T-cell (primary cell): ENCODE measurements at regions of chr20 and their contacts with region 1.

Region 1: GRCh38 chr20:9609887-9610502 is 95.6 kb downstream of the LAMP5 start:
- DNase-seq: peak in 15 of 35 experiments; percentile 1 to 45 (median 10)
- ATAC-seq: no peak
- H3K4me3 ChIP-seq: no peak overlapping the region
- H3K4me3 Mint-ChIP-seq: no peak overlapping the region
- H3K27ac ChIP-seq: no peak overlapping the region
- H3K27ac Mint-ChIP-seq: no peak overlapping the region
- H3K4me1 ChIP-seq: no peaks in the 10 kb centered on the region
- H3K4me1 Mint-ChIP-seq: no peaks in the 10 kb centered on the region
- H3K27me3 ChIP-seq: no peaks in the 10 kb centered on the region
- H3K27me3 Mint-ChIP-seq: peaks cover 0 to 3% of the 10 kb centered on the region in 2 donors

Region 2: GRCh38 chr20:9407805-9408421 is 202.1 kb before region 1 on chr20:
- CTCF ChIA-PET with region 1: interaction called, 8 to 19 read pairs
- POLR2A ChIA-PET with region 1: no interaction called
- DNase-seq: peak in 14 of 35 experiments; percentile 4 to 53 (median 14)
- ATAC-seq: no peak
- H3K4me3 ChIP-seq: no peak overlapping the region
- H3K4me3 Mint-ChIP-seq: no peak overlapping the region
- H3K27ac ChIP-seq: no peak overlapping the region
- H3K27ac Mint-ChIP-seq: no peak overlapping the region
- H3K4me1 ChIP-seq: no peaks in the 10 kb centered on the region
- H3K4me1 Mint-ChIP-seq: no peaks in the 10 kb centered on the region
- H3K27me3 ChIP-seq: no peaks in the 10 kb centered on the region
- H3K27me3 Mint-ChIP-seq: no peaks in the 10 kb centered on the region

Region 3: GRCh38 chr20:9689041-9689440 is 79.0 kb after region 1 on chr20:
- CTCF ChIA-PET with region 1: no interaction called
- POLR2A ChIA-PET with region 1: interaction called in 1 of 2 experiments, 12 read pairs
- DNase-seq: no peak
- ATAC-seq: no peak
- H3K4me3 ChIP-seq: no peak overlapping the region
- H3K4me3 Mint-ChIP-seq: no peak overlapping the region
- H3K27ac ChIP-seq: no peak overlapping the region
- H3K27ac Mint-ChIP-seq: no peak overlapping the region
- H3K4me1 ChIP-seq: no peaks in the 10 kb centered on the region
- H3K4me1 Mint-ChIP-seq: no peaks in the 10 kb centered on the region
- H3K27me3 ChIP-seq: no peaks in the 10 kb centered on the region
- H3K27me3 Mint-ChIP-seq: peaks cover 0 to 3% of the 10 kb centered on the region in 2 donors